HCT116 (cell line): ENCODE measurements at regions of chr7 and their contacts with region 1.

Region 1: GRCh38 chr7:25216837-25217236 is 11.4 kb downstream of the NPVF start:
- DNase-seq: peak; percentile 29
- ATAC-seq: no peak
- H3K4me3 ChIP-seq: no peak overlapping the region
- H3K27ac ChIP-seq: no peak overlapping the region
- H3K4me1 ChIP-seq: no peaks in the 10 kb centered on the region
- H3K27me3 ChIP-seq: peaks cover 20% of the 10 kb centered on the region; the same call in 1 of the 2 replicates
- CTCF ChIP-seq: peak; percentile 44 to 82 (median 69); a peak in 5 of 6 replicates
- POLR2A ChIP-seq: no peak
- RAD21 ChIP-seq: peak; percentile 34; the same call in 1 of the 2 replicates

Region 2: DNA sequence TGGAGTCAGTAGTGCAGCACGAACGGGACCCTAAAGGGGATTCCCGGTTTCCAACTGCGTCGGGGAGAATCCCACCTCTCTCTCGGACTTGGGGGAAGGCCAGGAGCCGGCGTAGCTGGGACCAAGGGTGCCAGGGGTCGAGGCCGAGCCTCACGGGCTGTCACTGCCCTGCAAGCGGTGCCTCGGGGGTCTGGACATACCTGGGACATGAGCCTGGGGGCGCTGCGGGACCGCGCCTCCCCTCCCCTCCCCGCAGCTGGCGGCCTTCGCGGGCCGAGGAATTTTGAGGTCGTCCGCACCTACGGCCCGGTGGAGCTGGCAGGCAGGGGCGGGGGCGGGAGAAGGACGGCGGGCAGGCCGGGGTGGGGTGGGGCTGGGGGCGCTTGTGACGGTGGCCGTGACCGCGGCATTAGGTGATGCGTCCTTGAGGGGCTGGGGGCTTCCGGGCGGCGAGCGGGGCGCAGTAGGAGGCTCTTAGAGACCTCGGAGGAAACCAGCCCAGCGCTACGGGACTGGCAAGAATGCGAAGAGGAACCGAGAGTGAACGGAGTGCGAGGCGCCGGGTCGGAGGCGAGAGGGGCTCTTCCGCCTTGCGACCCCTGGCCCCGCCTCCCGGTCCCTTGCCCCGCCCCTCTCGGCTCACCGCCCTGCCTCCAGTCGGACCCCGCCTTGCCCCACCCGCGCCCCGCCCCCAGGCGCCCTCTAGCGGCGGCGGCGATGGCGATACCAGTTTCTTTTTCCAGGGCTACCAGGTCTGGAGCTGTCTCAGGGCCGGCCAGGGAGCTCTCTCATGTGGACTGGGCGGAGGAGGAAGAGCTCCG is 36.9 kb before region 1 on chr7:
- CTCF ChIA-PET with region 1: interaction called, 11 read pairs
- POLR2A ChIA-PET with region 1: no interaction called
- RAD21 ChIA-PET with region 1: no interaction called
- intact Hi-C with region 1: no loop called
- DNase-seq: peak; percentile 32
- ATAC-seq: peak; percentile 98
- H3K4me3 ChIP-seq: peak overlapping the region; percentile 49 to 52
- H3K27ac ChIP-seq: no peak overlapping the region
- H3K4me1 ChIP-seq: peaks cover 0 to 8% of the 10 kb centered on the region in 2 experiments; a peak in 1 of 4 replicates
- H3K27me3 ChIP-seq: no peaks in the 10 kb centered on the region
- CTCF ChIP-seq: peak; percentile 36 to 79 (median 59); a peak in 5 of 6 replicates
- POLR2A ChIP-seq: no peak
- RAD21 ChIP-seq: no peak

Region 3: GRCh38 chr7:25228386-25228785 is 11.5 kb after region 1 on chr7 and contains the start of gene NPVF:
- CTCF ChIA-PET with region 1: interaction called, 27 read pairs
- POLR2A ChIA-PET with region 1: no interaction called
- RAD21 ChIA-PET with region 1: no interaction called
- intact Hi-C with region 1: no loop called
- DNase-seq: no peak
- ATAC-seq: no peak
- H3K4me3 ChIP-seq: no peak within 1 kb of the TSS
- H3K27ac ChIP-seq: no peak within 1 kb of the TSS
- H3K4me1 ChIP-seq: no peaks in the 10 kb centered on the region
- H3K27me3 ChIP-seq: peaks cover 50% of the 10 kb centered on the region
- CTCF ChIP-seq: no peak
- POLR2A ChIP-seq: no peak
- RAD21 ChIP-seq: no peak
- total RNA-seq, gene NPVF: not detected

Region 4: GRCh38 chr7:25303281-25304156 is 86.7 kb after region 1 on chr7:
- CTCF ChIA-PET with region 1: no interaction called
- POLR2A ChIA-PET with region 1: no interaction called
- RAD21 ChIA-PET with region 1: no interaction called
- intact Hi-C with region 1: no loop called
- DNase-seq: no peak
- ATAC-seq: no peak
- H3K4me3 ChIP-seq: no peak overlapping the region
- H3K27ac ChIP-seq: no peak overlapping the region
- H3K4me1 ChIP-seq: no peaks in the 10 kb centered on the region
- H3K27me3 ChIP-seq: peaks cover 42% of the 10 kb centered on the region
- CTCF ChIP-seq: no peak
- POLR2A ChIP-seq: no peak
- RAD21 ChIP-seq: no peak